Vagina (tissue), 2 donors: ENCODE measurements at regions of chr9 and their contacts with region 1.

Region 1: DNA sequence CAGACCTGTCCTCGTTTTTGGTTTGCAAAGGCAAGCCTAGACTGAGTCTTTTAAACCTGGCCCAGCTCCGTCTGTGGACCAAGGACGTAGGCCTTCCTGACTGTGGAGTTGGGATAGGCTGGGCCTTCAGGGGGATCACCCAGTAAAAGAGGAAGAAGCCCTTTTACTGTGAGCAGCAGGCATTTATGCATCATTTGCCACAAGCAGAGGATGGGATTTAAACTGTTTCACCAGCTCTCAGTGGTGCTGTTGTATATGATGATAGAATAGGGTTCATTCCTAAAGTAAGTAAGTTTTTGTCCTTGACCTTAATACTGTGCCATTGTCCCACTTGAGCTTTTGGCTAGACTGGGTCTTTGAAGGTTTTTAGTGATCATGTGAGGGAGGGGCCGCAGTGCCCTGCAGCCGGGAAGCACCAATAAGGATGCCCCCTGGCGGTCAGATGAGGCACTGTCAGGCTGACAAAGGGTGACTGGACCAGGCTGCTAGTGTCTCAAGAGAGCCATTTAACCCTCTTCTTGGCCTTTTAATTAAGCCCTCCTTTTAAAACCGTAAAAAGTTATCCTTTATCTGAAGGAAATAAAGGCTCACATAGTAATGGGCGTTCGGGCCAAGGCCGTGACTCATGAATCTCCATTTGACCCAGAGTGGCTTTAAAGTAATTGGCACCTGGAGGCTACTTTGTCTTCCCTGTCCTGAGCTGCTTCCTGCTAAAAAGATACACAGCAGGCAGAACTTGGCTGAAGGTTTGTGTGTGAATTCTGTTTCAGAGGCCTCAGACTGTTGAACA is 74.0 kb downstream of the UBAP1 start:
- DNase-seq: no peak
- H3K4me3 ChIP-seq: no peak overlapping the region
- H3K27ac ChIP-seq: peak overlapping the region; percentile 71
- H3K4me1 ChIP-seq: peaks cover 48% of the 10 kb centered on the region
- H3K27me3 ChIP-seq: no peaks in the 10 kb centered on the region
- CTCF ChIP-seq: peak; percentile 57 to 96 (median 93)
- POLR2A ChIP-seq: no peak

Region 2: GRCh38 chr9:34126207-34127034 is 126.4 kb before region 1 on chr9 and contains the start of gene DCAF12:
- intact Hi-C with region 1: loop called (anchors 10 kb)
- DNase-seq: peak in 1 of 2 donors; percentile 91
- H3K4me3 ChIP-seq: peak within 1 kb of the TSS; percentile 60 to 87
- H3K27ac ChIP-seq: peak within 1 kb of the TSS; percentile 91
- H3K4me1 ChIP-seq: peaks cover 59% of the 10 kb centered on the region
- H3K27me3 ChIP-seq: no peaks in the 10 kb centered on the region
- CTCF ChIP-seq: peak in 1 of 3 experiments; percentile 42
- POLR2A ChIP-seq: peak in 1 of 2 donors; percentile 35
- total RNA-seq, gene DCAF12: 31.2 TPM

Region 3: DNA sequence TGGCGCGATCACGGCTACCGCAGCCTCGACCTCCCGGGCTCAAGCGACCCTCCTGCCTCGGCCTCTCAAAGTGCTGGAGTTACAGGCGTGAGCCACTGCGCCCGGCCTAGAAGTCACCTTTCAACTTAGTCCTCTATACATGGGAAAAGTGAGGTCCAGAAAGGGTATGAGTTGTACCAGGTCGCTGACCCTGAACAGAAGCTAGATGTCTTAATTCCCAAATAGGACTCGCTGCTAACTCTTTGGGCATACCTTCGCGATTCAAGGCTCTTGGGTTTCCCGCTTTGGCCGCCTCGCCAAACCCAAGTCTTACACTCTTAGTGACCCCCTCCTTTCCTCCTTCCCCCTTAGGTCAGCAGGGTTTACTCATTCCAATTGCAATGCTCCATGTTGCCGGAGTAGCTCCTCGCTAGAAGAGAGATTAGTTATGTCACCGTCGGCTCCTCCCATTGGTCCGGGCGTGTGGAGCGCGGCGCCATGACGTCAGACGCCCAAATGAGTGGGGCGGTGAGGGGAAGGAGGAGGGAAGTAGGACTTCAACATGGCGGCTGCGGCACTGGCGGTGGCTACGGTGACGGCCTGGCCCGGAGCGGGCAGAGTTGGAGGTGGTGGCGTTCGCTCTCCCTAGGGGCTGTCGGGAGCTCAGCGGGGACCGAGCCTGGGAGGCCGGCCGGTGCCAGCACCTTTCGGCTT is 74.2 kb before region 1 on chr9 and contains the start of gene UBAP1:
- intact Hi-C with region 1: loop called (anchors 10 kb)
- DNase-seq: peak; percentile 98 to 99
- H3K4me3 ChIP-seq: peak within 1 kb of the TSS; percentile 67 to 87
- H3K27ac ChIP-seq: peak within 1 kb of the TSS; percentile 97
- H3K4me1 ChIP-seq: peaks cover 19% of the 10 kb centered on the region
- H3K27me3 ChIP-seq: no peaks in the 10 kb centered on the region
- CTCF ChIP-seq: no peak
- POLR2A ChIP-seq: peak in 1 of 2 donors; percentile 96
- total RNA-seq, gene UBAP1: 43.0 TPM